H1 (cell line): ENCODE measurements at regions of chr7 and their contacts with region 1.

Region 1: GRCh38 chr7:322111-322671 is 32.2 kb downstream of the FOXL3 start:
- DNase-seq: peak; percentile 27 to 99
- H3K4me3 ChIP-seq: peak overlapping the region in 3 of 4 experiments; percentile 17 to 44 (median 23); a peak in 3 of 8 replicates
- H3K27ac ChIP-seq: no peak overlapping the region
- H3K4me1 ChIP-seq: peaks cover 0 to 6% (median 1%) of the 10 kb centered on the region in 4 experiments; a peak in 4 of 7 replicates
- H3K27me3 ChIP-seq: peaks cover 0 to 2% (median under 1%) of the 10 kb centered on the region in 4 experiments; a peak in 1 of 7 replicates
- CTCF ChIP-seq: peak; percentile 84 to 94 (median 92)
- EP300 ChIP-seq: no peak
- POLR2A ChIP-seq: no peak
- RAD21 ChIP-seq: peak; percentile 91 to 96

Region 2: GRCh38 chr7:234655-235578 is 87.3 kb before region 1 on chr7:
- CTCF ChIA-PET with region 1: no interaction called
- POLR2A ChIA-PET with region 1: no interaction called
- DNase-seq: no peak
- H3K4me3 ChIP-seq: no peak overlapping the region
- H3K27ac ChIP-seq: no peak overlapping the region
- H3K4me1 ChIP-seq: no peaks in the 10 kb centered on the region
- H3K27me3 ChIP-seq: no peaks in the 10 kb centered on the region
- CTCF ChIP-seq: no peak
- EP300 ChIP-seq: no peak
- POLR2A ChIP-seq: no peak
- RAD21 ChIP-seq: no peak

Region 3: DNA sequence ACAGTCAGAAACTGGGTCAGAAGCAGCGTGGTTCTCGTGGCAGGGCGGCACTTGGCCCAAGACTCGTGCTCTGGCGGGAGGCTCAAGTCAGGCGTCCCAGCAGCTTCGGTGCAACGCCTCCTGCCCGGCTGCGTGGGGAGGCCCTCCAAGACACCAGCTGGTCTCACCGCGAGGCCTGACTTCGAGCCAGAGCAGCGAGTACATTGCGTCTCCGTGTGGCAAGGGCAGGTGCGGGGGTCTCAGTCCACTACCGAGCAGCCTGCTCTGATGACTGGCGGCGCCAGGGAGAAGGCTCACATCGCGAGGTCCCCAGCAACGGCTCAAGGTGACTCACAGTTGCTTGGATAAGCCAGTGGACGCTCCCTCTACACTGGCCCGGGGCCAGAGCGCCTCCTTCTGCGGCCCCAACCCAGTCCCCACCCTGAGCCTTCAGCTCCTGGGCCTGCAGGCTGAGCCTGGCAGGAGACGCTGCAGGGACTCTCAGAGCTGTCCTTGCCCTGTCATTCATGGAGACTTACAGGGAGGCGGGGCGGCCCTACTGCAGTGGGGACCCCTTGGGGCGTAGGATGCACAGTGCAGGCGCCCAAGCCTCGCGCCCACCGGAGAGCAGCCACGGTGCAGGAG is 446.8 kb after region 1 on chr7:
- CTCF ChIA-PET with region 1: interaction called, 22 read pairs
- POLR2A ChIA-PET with region 1: no interaction called
- DNase-seq: peak; percentile 10 to 63
- H3K4me3 ChIP-seq: no peak overlapping the region
- H3K27ac ChIP-seq: no peak overlapping the region
- H3K4me1 ChIP-seq: peaks cover 0 to 3% (median under 1%) of the 10 kb centered on the region in 4 experiments; a peak in 2 of 7 replicates
- H3K27me3 ChIP-seq: no peaks in the 10 kb centered on the region
- CTCF ChIP-seq: peak; percentile 18 to 48 (median 40); a peak in 3 of 4 replicates
- EP300 ChIP-seq: no peak
- POLR2A ChIP-seq: no peak
- RAD21 ChIP-seq: peak; percentile 34 to 48; a peak in 3 of 4 replicates

Region 4: DNA sequence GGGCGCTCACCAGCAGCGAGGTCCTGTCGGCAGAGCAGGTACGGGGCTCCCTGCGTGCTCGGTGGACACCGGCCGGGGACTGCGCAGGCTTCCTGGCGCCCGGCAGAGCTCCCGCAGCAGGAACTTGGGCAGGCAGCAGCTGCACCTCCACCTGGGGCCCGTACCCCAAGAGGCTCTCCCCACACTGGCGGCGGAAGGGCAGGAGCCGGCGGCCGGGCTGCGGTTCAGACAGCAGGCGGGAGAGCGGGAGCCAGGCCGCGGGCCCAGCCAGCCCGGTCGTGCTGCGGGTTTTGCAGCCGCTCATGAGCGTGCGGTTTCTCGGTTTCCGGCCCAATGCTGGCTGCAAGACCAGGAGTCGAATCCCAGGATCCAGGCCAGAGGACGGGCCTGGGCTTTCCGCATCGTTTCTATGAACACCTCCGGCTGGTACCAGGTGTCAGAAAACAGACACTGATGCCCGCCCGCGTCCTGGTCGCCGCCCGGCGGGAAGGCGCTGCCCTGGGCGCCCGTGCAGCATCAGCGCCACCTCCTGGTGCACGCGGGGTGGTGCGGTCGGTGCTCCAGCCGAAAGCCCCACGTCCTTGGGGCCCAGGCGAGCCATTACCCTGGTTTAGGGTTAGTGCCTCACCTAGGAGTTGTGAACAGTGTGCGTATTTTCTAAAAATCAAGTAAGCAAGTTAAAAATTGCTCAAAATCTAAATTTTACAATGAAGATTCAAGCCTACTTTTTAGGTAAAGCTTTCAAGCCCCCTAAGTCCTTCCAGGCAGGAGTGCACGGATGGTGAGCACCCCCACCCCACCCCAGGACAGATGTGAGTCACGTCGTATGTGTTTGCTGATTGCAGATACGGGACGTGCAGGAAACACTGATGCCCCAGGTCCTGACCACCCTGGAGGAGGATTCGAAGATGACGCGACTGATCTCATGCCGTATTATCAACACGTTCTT is 452.2 kb after region 1 on chr7:
- CTCF ChIA-PET with region 1: interaction called, 22 read pairs
- POLR2A ChIA-PET with region 1: no interaction called
- DNase-seq: peak; percentile 27 to 96
- H3K4me3 ChIP-seq: no peak overlapping the region
- H3K27ac ChIP-seq: no peak overlapping the region
- H3K4me1 ChIP-seq: peaks cover 0 to 5% (median under 1%) of the 10 kb centered on the region in 4 experiments; a peak in 2 of 7 replicates
- H3K27me3 ChIP-seq: no peaks in the 10 kb centered on the region
- CTCF ChIP-seq: peak; percentile 89 to 99 (median 97)
- EP300 ChIP-seq: no peak
- POLR2A ChIP-seq: no peak
- RAD21 ChIP-seq: peak; percentile 92 to 95